Naive thymus-derived CD8-positive, alpha-beta T cell (primary cell): ENCODE measurements at regions of chr3 and their contacts with region 1.

Region 1: DNA sequence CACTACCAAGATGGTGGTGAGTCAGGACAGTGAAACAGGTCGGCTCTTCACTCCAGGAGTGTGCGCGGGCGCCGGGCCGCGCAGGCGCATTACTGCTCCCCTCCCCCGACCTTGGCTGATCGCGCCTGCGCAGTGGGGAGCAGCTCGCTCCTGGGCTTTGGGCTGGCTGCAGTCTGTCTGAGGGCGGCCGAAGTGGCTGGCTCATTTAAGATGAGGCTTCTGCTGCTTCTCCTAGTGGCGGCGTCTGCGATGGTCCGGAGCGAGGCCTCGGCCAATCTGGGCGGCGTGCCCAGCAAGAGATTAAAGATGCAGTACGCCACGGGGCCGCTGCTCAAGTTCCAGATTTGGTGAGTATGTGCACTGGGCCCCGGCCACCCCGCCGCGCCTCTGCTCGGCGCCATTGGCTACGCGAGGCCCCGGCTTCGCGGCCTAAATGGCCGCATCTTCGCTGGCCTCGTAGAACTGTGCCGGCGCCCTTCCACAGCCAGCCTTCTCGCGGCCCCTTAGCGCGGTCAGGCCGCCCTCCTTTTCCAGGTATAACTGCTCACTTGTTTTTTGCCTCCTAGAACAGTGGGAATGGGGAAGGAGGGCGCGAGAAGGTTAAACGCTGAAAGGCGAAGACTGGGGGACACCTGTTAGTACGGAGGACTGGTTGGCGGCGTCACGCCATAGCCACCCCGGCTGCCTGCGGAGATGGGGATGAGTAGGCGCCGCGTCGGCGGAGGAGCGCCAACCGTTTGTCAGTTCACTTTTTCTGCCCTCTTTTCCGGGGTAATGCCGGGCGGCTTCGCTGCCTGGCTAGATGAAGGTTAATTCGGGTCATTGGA is at the start of gene SELENOT:
- DNase-seq: peak; percentile 90 to 97 (median 95)
- ATAC-seq: peak; percentile 86
- H3K4me3 Mint-ChIP-seq: peak within 1 kb of the TSS; percentile 97 to 99 (median 98)
- H3K27ac Mint-ChIP-seq: peak within 1 kb of the TSS; percentile 98 to 100 (median 99)
- H3K4me1 Mint-ChIP-seq: peaks cover 33 to 90% (median 65%) of the 10 kb centered on the region in 4 donors
- H3K27me3 Mint-ChIP-seq: peaks cover 0 to 4% (median 0%) of the 10 kb centered on the region in 5 donors
- polyA plus RNA-seq, gene SELENOT: 142 to 267 (median 173) TPM

Region 2: GRCh38 chr3:150546226-150547044 is 56.9 kb before region 1 on chr3 and contains the starts of genes EIF2A and SERP1:
- POLR2A ChIA-PET with region 1: interaction called, 34 read pairs
- DNase-seq: peak; percentile 96 to 100 (median 99)
- ATAC-seq: peak; percentile 89 to 90
- H3K4me3 Mint-ChIP-seq: peak within 1 kb of the TSS; percentile 92 to 99 (median 96)
- H3K27ac Mint-ChIP-seq: peak within 1 kb of the TSS; percentile 97 to 100 (median 98)
- H3K4me1 Mint-ChIP-seq: peaks cover 25 to 84% (median 75%) of the 10 kb centered on the region in 4 donors
- H3K27me3 Mint-ChIP-seq: no peaks in the 10 kb centered on the region
- polyA plus RNA-seq, gene EIF2A: 47.7 to 67.2 (median 50.8) TPM
- polyA plus RNA-seq, gene SERP1: 121 to 165 (median 144) TPM

Region 3: GRCh38 chr3:150662410-150663200 is 59.2 kb after region 1 on chr3:
- POLR2A ChIA-PET with region 1: no interaction called
- DNase-seq: no peak
- ATAC-seq: no peak
- H3K4me3 Mint-ChIP-seq: no peak overlapping the region
- H3K27ac Mint-ChIP-seq: no peak overlapping the region
- H3K4me1 Mint-ChIP-seq: peaks cover 0 to 17% (median 6%) of the 10 kb centered on the region in 4 donors
- H3K27me3 Mint-ChIP-seq: peaks cover 1 to 30% (median 4%) of the 10 kb centered on the region in 5 donors